Dorsolateral prefrontal cortex (tissue), 120 donors: ENCODE measurements at regions of chr3 and their contacts with region 1.

Region 1: GRCh38 chr3:184874709-184875644 is 63.0 kb downstream of the VPS8 start:
- DNase-seq: peak in 3 of 10 donors; percentile 18 to 31 (median 24)
- H3K4me3 ChIP-seq: no peak overlapping the region
- H3K27ac ChIP-seq: no peak overlapping the region
- H3K27me3 ChIP-seq: no peaks in the 10 kb centered on the region
- CTCF ChIP-seq: peak; percentile 41 to 84 (median 70)

Region 2: DNA sequence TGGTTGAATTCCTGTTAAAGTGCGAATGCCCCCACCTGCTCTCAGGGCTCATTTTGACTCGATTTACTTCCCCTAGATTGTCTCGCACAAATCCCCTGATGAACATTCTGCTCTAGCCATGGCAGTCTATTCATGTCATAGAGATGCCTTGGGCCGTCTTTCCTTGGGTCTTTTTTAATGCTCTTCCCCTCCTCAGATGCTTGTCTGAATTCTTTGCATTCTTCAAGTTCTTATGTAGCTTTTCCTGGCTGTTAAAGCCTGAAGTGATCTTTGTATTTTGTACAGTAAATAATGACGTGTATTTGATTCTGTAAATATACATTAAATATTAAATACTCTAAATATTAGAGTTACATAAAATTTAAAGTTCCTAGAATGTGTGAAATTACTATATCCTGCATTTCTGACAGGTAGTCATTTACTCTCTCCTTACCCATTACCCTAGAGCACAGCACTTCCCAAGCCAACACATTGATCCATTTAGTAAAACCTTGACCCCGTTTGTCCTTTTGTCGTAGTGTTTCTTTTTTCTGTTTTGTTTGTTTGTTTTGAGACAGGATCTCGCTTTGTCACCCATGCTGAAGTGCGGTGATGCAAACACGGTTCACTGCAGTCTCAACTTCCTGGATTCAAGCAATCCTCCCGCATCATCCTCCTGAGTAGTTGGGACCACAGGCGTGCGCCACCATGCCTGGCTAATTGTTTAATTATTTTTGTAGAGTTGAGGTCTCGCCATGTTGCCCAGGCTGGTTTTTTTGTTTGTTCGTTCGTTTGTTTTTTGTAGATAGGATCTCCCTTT is 1129.5 kb before region 1 on chr3:
- intact Hi-C with region 1: no loop called
- DNase-seq: no peak
- H3K4me3 ChIP-seq: no peak overlapping the region
- H3K27ac ChIP-seq: no peak overlapping the region
- H3K27me3 ChIP-seq: no peaks in the 10 kb centered on the region
- CTCF ChIP-seq: no peak

Region 3: DNA sequence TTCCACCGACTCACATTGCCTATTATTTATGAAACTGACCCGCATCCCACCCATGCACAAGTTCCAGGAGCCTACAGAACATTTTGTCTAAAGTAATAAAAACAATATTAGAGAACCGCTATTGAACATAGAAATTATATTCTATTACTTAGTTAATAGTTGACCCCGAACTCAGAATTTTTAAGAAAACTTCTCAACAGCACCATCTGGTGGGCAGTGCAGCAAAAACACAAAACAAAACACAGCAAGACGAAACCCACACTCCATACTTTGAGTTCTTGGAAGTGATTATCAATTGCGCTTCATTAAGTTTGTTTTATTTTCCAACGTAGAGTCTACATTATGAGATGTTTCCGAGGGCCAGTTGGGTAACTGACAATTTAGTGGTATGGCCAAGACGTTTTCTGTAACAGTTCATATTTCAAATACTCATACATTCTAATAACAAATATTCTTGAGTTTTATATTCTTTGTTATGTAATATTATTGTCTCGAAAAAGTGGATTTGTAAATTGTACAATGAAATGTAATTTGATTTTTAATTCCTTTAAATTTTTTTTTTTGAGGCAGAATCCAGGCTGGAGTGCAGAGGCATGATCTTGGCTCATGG is 301.9 kb after region 1 on chr3:
- intact Hi-C with region 1: loop called (anchors 5 kb)
- DNase-seq: peak in 3 of 10 donors; percentile 19 to 42 (median 36)
- H3K4me3 ChIP-seq: peak overlapping the region in 4 of 59 donors; percentile 4 to 39 (median 18)
- H3K27ac ChIP-seq: no peak overlapping the region
- H3K27me3 ChIP-seq: peaks cover 0 to 3% (median 0%) of the 10 kb centered on the region in 45 donors
- CTCF ChIP-seq: peak; percentile 66 to 93 (median 82)

Region 4: GRCh38 chr3:185215873-185216606 is 341.1 kb after region 1 on chr3:
- intact Hi-C with region 1: loop called in 1 of 2 experiments (anchors 5 kb)
- DNase-seq: no peak
- H3K4me3 ChIP-seq: peak overlapping the region in 55 of 59 donors; percentile 0 to 60 (median 38)
- H3K27ac ChIP-seq: peak overlapping the region in 53 of 59 donors; percentile 9 to 86 (median 58)
- H3K27me3 ChIP-seq: no peaks in the 10 kb centered on the region
- CTCF ChIP-seq: peak; percentile 40 to 77 (median 61)